GM12878 (cell line): ENCODE measurements at regions of chr11 and their contacts with region 1.

Region 1: DNA sequence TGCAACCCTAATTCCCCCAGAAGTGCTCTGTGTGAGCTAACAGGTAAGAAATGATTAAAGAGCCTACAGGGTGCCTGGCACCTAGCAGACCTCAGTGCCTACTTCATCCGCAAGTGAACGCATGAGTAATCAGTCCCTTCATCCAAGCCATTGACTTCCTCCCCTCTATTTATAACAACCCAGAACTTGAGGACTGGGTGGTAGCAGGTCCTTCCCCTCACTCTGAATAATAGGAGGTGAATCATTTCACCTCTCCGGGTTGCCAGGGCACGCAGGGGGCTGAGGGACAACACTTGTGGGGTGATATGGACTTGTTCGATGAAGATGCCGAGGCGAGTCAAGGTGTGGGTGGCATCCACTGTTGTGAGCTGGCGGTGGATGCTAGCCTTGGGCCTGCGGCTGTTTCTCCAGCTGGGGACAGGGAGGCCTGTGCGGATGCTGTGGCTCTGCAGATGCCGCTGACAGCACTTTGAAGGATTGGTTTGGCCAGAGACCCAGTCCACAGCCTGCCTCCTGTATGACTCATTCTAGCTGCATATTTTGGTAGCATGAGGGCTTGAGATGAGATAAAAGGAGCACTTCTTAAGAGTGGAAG is 11.7 kb upstream of the SORL1-AS1 start:
- DNase-seq: no peak
- ATAC-seq: peak; percentile 64
- H3K4me3 ChIP-seq: peak overlapping the region; percentile 57; the same call in 1 of the 2 replicates
- H3K27ac ChIP-seq: peak overlapping the region; percentile 83
- H3K4me1 ChIP-seq: peaks cover 91% of the 10 kb centered on the region
- H3K27me3 ChIP-seq: no peaks in the 10 kb centered on the region
- CTCF ChIP-seq: no peak
- EP300 ChIP-seq: no peak; a peak in 1 of 4 replicates
- POLR2A ChIP-seq: peak; percentile 72
- RAD21 ChIP-seq: no peak

Region 2: DNA sequence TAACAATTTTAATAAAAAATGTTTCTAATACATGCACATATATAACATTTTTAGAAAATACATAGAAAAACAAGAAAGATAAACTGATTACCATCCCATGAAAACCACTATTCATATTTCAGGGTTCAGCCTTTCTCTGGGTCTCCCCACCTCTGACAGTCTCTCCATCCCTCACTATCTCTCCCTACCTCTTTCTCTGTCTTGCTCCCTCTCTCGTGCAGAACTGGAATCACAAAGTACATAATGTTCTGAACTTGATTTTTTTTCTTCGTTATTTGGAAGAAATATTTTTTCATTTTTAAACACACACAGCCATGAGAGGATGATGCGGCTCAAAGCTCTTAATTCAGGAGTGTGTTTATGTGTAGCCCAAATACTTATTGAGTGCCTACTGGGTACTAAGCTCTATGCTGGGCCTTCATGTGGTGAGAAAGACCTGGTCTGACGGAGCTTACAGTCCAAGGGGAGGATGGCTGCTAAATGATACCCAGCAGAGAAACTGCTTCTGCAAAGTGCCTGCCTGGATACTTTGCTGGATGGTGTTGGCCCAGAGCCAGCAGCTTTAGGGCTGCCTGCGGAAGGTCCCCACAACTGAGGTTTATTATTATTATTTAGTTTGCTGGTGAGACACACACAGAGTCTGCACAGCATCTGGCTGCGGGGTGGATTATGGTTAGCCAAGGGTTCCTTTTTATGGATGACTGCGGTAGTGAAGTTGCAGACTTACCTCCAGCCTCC is 129.3 kb before region 1 on chr11:
- CTCF ChIA-PET with region 1: interaction called, 3 read pairs
- POLR2A ChIA-PET with region 1: interaction called, 14 read pairs
- RAD21 ChIA-PET with region 1: interaction called, 33 read pairs
- SMC1A ChIA-PET with region 1: interaction called, 25 read pairs
- in situ Hi-C with region 1: no loop called
- intact Hi-C with region 1: no loop called
- DNase-seq: no peak
- ATAC-seq: no peak
- H3K4me3 ChIP-seq: no peak overlapping the region
- H3K27ac ChIP-seq: no peak overlapping the region
- H3K4me1 ChIP-seq: peaks cover 49% of the 10 kb centered on the region
- H3K27me3 ChIP-seq: no peaks in the 10 kb centered on the region
- CTCF ChIP-seq: peak in 1 of 3 experiments; percentile 9; a peak in 1 of 6 replicates
- EP300 ChIP-seq: no peak
- POLR2A ChIP-seq: no peak
- RAD21 ChIP-seq: no peak

Region 3: DNA sequence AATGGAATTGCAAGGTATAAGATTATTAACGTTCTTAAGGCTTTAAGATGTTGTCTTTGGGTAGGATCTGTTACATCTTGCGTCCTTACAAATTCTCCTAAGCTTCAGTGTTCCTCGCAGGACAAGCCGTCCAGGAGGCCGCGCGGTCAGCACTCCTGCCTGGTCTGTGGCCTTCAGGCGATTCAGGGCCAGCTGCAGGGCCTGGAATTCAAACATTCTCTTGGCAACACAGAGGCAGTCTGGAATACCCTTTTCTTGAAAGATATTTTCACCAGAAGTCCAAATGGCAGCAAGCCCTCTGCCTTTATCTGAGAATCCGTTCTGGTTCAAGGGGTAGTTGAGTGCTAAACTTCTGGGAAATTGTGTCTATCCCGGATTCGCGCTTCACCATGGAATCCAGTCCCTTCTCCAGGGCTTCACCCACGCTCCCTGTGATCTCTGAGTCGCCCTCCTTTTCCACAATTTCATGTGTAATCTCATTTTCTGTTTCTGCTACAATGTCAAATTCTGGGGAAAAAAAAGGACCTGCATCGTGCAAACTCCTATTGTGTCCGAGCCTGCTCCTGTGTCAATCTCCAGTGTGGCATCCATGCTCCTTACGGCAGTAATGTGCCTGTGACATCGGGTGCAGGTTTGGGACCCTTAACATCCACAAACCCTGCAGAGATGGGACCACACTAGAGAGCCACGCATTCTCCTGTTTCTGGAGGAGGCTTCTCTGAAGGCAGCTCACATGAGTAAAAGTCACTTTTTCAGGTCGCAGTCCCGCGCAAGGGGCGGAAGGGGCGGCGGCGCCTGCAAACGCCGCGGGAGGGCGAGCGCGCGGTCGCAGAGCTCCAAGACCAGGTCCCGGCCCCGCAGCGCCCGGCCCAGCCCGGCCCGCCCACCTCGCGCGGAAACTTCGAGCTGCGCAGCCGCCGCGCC is 37.7 kb before region 1 on chr11:
- CTCF ChIA-PET with region 1: no interaction called
- POLR2A ChIA-PET with region 1: interaction called, 4 read pairs
- RAD21 ChIA-PET with region 1: interaction called, 10 read pairs
- SMC1A ChIA-PET with region 1: interaction called, 7 read pairs
- in situ Hi-C with region 1: no loop called
- intact Hi-C with region 1: no loop called
- DNase-seq: no peak
- ATAC-seq: peak; percentile 57
- H3K4me3 ChIP-seq: peak overlapping the region; percentile 39; the same call in 1 of the 2 replicates
- H3K27ac ChIP-seq: no peak overlapping the region
- H3K4me1 ChIP-seq: peaks cover 46% of the 10 kb centered on the region
- H3K27me3 ChIP-seq: no peaks in the 10 kb centered on the region
- CTCF ChIP-seq: peak in 2 of 3 experiments; percentile 14 to 21; a peak in 1 of 6 replicates
- EP300 ChIP-seq: no peak
- POLR2A ChIP-seq: no peak
- RAD21 ChIP-seq: no peak

Region 4: GRCh38 chr11:121446752-121447156 is 17.7 kb before region 1 on chr11:
- CTCF ChIA-PET with region 1: interaction called, 31 read pairs
- POLR2A ChIA-PET with region 1: interaction called, 86 read pairs
- RAD21 ChIA-PET with region 1: interaction called, 232 read pairs
- SMC1A ChIA-PET with region 1: interaction called, 266 read pairs
- in situ Hi-C with region 1: no loop called
- intact Hi-C with region 1: no loop called
- DNase-seq: no peak
- ATAC-seq: peak; percentile 42
- H3K4me3 ChIP-seq: no peak overlapping the region
- H3K27ac ChIP-seq: peak overlapping the region; percentile 76
- H3K4me1 ChIP-seq: peaks cover 59% of the 10 kb centered on the region
- H3K27me3 ChIP-seq: no peaks in the 10 kb centered on the region
- CTCF ChIP-seq: peak in 2 of 3 experiments; percentile 19 to 37; a peak in 4 of 6 replicates
- EP300 ChIP-seq: no peak
- POLR2A ChIP-seq: no peak
- RAD21 ChIP-seq: peak; percentile 48

Region 5: GRCh38 chr11:121494355-121495099 is 30.1 kb after region 1 on chr11:
- CTCF ChIA-PET with region 1: interaction called, 17 read pairs
- POLR2A ChIA-PET with region 1: interaction called, 17 read pairs
- RAD21 ChIA-PET with region 1: interaction called, 57 read pairs
- SMC1A ChIA-PET with region 1: interaction called, 34 read pairs
- in situ Hi-C with region 1: no loop called
- intact Hi-C with region 1: no loop called
- DNase-seq: peak; percentile 69
- ATAC-seq: peak; percentile 87
- H3K4me3 ChIP-seq: peak overlapping the region; percentile 24
- H3K27ac ChIP-seq: peak overlapping the region; percentile 66
- H3K4me1 ChIP-seq: peaks cover 32% of the 10 kb centered on the region
- H3K27me3 ChIP-seq: no peaks in the 10 kb centered on the region
- CTCF ChIP-seq: no peak
- EP300 ChIP-seq: no peak
- POLR2A ChIP-seq: no peak
- RAD21 ChIP-seq: no peak

Region 6: DNA sequence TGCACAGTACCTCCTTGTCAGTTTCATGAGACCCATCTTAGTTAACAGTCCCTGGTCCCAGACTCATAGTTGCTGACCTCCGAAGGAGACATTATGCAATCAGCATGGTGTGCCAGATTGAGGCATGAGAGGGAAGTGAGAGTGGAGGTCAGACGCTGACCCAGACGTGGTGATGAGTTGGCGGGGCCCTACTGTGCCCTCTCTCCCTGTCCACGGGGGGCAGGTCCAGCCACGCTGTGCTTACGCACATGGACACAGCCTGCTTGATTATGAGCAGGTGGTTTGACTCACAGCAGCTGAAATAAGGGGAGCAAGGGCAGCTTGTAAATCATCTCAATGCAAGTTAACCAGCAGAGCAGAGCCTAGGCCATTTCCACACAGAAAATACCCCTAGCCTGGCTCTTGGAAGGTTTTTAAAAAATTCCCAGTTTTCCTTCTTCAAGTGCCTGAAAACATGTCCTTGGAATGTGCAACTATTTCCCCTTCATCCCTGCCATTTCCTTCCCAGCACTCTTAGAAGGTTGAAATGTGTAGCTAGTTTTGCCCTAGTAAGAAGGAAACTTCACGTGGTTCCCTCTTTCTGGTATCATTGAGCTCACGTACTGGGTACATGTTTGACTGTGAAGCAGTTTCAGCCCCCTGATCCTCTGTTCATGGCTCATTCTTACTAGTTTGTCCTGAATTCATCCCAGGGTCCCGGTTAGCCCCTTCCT is 111.0 kb after region 1 on chr11:
- CTCF ChIA-PET with region 1: interaction called, 5 read pairs
- POLR2A ChIA-PET with region 1: interaction called, 13 read pairs
- RAD21 ChIA-PET with region 1: interaction called, 26 read pairs
- SMC1A ChIA-PET with region 1: interaction called, 29 read pairs
- in situ Hi-C with region 1: no loop called
- intact Hi-C with region 1: no loop called
- DNase-seq: peak; percentile 74
- ATAC-seq: peak; percentile 93
- H3K4me3 ChIP-seq: no peak overlapping the region
- H3K27ac ChIP-seq: peak overlapping the region; percentile 75
- H3K4me1 ChIP-seq: peaks cover 56% of the 10 kb centered on the region
- H3K27me3 ChIP-seq: no peaks in the 10 kb centered on the region
- CTCF ChIP-seq: no peak
- EP300 ChIP-seq: peak; percentile 86 to 91
- POLR2A ChIP-seq: no peak; the same call in 1 of the 2 replicates
- RAD21 ChIP-seq: no peak